ENCODE measurements at regions of chr10 and their contacts with region 1.

Region 1: GRCh38 chr10:62038609-62039190 is 137.2 kb downstream of the ARID5B start:
- DNase-seq: peak; percentile 78
- ATAC-seq: peak; percentile 74
- H3K4me3 ChIP-seq: peak overlapping the region in 2 of 3 experiments; percentile 38 to 42; a peak in 3 of 6 replicates
- H3K27ac ChIP-seq: peak overlapping the region; percentile 92
- H3K4me1 ChIP-seq: peaks cover 79% of the 10 kb centered on the region
- H3K27me3 ChIP-seq: no peaks in the 10 kb centered on the region
- CTCF ChIP-seq: peak; percentile 84
- EP300 ChIP-seq: no peak; a peak in 1 of 4 replicates
- POLR2A ChIP-seq: no peak
- RAD21 ChIP-seq: peak; percentile 75

Region 2: DNA sequence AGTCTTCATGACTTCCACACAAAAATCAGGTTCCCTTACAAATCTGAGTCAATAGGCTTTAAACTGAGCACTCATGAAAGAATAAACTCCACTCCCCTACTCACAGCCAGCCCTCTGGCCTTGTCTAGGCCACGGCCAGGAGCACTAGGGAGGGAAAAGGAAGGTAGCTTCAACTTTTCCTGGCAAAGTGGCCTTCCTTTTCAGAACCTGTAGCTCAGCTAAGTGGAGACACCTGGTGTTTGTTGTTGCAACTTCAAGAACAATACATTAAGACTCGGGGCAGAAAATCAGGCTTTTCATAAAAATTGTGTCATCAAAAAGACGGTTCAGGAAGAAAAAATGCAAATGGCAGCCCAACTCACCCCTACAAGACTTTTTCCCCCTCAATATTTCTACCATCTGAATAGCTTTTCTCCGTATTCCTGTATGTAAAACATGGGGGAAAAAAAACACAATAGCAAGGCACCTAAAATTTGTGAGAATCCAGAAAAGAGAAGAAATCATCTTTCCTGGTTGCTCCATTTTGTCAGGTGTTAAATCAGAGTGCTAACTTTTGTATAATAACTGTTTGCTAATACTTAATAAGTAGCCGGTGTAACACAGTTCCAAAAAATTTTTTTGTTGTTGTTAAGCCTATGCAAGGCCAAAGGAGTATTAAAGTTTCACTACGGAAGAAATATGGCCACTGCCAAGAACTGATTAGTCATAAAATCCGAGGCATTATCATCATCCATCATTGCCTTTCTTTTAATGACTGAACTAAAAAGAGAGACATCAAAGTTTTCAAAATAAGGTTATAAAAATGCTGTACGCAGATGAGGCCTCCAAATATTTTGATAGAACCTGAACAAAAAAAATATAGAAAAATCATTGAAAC is 203.4 kb before region 1 on chr10:
- CTCF ChIA-PET with region 1: no interaction called
- POLR2A ChIA-PET with region 1: no interaction called
- in situ Hi-C with region 1: no loop called
- intact Hi-C with region 1: loop called (anchors 5 kb)
- DNase-seq: peak; percentile 44
- ATAC-seq: peak; percentile 39; the same call in 1 of the 3 replicates
- H3K4me3 ChIP-seq: no peak overlapping the region
- H3K27ac ChIP-seq: no peak overlapping the region
- H3K4me1 ChIP-seq: peaks cover 66% of the 10 kb centered on the region
- H3K27me3 ChIP-seq: no peaks in the 10 kb centered on the region; a peak in 1 of 5 replicates
- CTCF ChIP-seq: peak; percentile 61
- EP300 ChIP-seq: no peak
- POLR2A ChIP-seq: no peak
- RAD21 ChIP-seq: peak; percentile 58

Region 3: DNA sequence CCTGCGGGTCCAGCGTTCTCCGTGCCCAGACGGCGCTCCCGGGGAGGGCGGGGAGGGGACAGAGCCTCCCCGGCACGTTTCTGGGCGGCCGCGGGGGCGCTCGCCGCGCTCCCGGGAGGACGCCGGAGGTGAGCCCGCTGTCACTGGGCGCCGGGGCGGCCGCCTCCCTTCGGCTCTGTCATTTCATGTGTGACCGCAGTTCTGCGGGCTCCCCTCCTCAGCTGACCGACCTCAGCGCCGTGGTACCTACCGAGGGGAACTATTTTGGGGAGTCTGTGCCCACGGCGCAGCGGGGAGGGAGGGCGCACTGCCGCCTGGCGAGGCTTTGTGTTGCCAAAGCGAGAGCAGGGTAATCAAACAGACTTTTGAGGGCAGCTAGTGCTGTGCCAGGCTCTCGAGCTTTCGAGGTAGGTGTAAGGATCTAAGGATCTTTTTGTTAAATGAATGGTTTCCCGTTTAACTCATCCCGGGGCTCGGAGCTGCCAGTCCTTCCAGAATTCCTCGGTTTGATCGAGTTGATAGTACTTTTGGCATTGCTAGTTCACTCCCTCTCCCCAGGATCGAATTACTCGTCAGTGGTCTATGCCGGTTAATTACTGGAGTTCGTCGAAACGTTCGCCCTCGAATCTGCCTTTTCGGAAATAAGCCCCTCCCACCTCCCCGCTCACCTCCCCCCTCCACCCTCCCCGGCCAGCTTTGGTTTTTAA is 135.3 kb before region 1 on chr10:
- CTCF ChIA-PET with region 1: no interaction called
- POLR2A ChIA-PET with region 1: interaction called, 6 read pairs
- in situ Hi-C with region 1: no loop called
- intact Hi-C with region 1: loop called (anchors 1 kb)
- DNase-seq: peak; percentile 38
- ATAC-seq: peak; percentile 89
- H3K4me3 ChIP-seq: peak overlapping the region; percentile 93 to 96 (median 94)
- H3K27ac ChIP-seq: peak overlapping the region; percentile 94
- H3K4me1 ChIP-seq: peaks cover 51% of the 10 kb centered on the region
- H3K27me3 ChIP-seq: no peaks in the 10 kb centered on the region; a peak in 1 of 5 replicates
- CTCF ChIP-seq: peak; percentile 36; the same call in 1 of the 2 replicates
- EP300 ChIP-seq: no peak
- POLR2A ChIP-seq: peak; percentile 39 to 47; a peak in 2 of 4 replicates
- RAD21 ChIP-seq: peak; percentile 45; the same call in 1 of the 2 replicates

Region 4: GRCh38 chr10:62050893-62051433 is 12.3 kb after region 1 on chr10:
- CTCF ChIA-PET with region 1: no interaction called
- POLR2A ChIA-PET with region 1: interaction called, 69 read pairs
- in situ Hi-C with region 1: no loop called
- intact Hi-C with region 1: no loop called
- DNase-seq: peak; percentile 70
- ATAC-seq: no peak
- H3K4me3 ChIP-seq: peak overlapping the region; percentile 69 to 81 (median 71)
- H3K27ac ChIP-seq: peak overlapping the region; percentile 89
- H3K4me1 ChIP-seq: peaks cover 86% of the 10 kb centered on the region
- H3K27me3 ChIP-seq: no peaks in the 10 kb centered on the region; a peak in 1 of 5 replicates
- CTCF ChIP-seq: no peak
- EP300 ChIP-seq: no peak
- POLR2A ChIP-seq: no peak
- RAD21 ChIP-seq: no peak

Region 5: GRCh38 chr10:62244780-62245467 is 206.2 kb after region 1 on chr10:
- CTCF ChIA-PET with region 1: interaction called, 25 read pairs
- POLR2A ChIA-PET with region 1: interaction called, 13 read pairs
- in situ Hi-C with region 1: loop called (anchors 10 kb)
- intact Hi-C with region 1: loop called (anchors 1 kb)
- DNase-seq: peak; percentile 67
- ATAC-seq: peak; percentile 64
- H3K4me3 ChIP-seq: no peak overlapping the region
- H3K27ac ChIP-seq: no peak overlapping the region
- H3K4me1 ChIP-seq: peaks cover 12% of the 10 kb centered on the region
- H3K27me3 ChIP-seq: no peaks in the 10 kb centered on the region
- CTCF ChIP-seq: peak; percentile 84
- EP300 ChIP-seq: no peak; a peak in 1 of 4 replicates
- POLR2A ChIP-seq: no peak
- RAD21 ChIP-seq: peak; percentile 60; the same call in 1 of the 2 replicates

Region 6: GRCh38 chr10:63744060-63744941 is 1705.6 kb after region 1 on chr10:
- CTCF ChIA-PET with region 1: no interaction called
- POLR2A ChIA-PET with region 1: no interaction called
- in situ Hi-C with region 1: no loop called
- intact Hi-C with region 1: no loop called
- DNase-seq: no peak
- ATAC-seq: no peak
- H3K4me3 ChIP-seq: no peak overlapping the region
- H3K27ac ChIP-seq: no peak overlapping the region
- H3K4me1 ChIP-seq: peaks cover 4% of the 10 kb centered on the region
- H3K27me3 ChIP-seq: no peaks in the 10 kb centered on the region
- CTCF ChIP-seq: no peak
- EP300 ChIP-seq: no peak
- POLR2A ChIP-seq: no peak
- RAD21 ChIP-seq: no peak

Measured in HepG2 (cell line).